ENCODE measurements at regions of chr9 and their contacts with region 1.

Region 1: GRCh38 chr9:4762108-4762885 is 21.3 kb upstream of the AK3 start:
- DNase-seq: peak; percentile 81 to 88
- H3K4me3 ChIP-seq: no peak overlapping the region
- H3K27ac ChIP-seq: no peak overlapping the region
- H3K4me1 ChIP-seq: peaks cover 0 to 7% of the 10 kb centered on the region in 2 donors
- H3K27me3 ChIP-seq: no peaks in the 10 kb centered on the region
- CTCF ChIP-seq: peak; percentile 55 to 92 (median 79)
- POLR2A ChIP-seq: no peak

Region 2: GRCh38 chr9:4657426-4658159 is 104.7 kb before region 1 on chr9:
- intact Hi-C with region 1: no loop called
- DNase-seq: no peak
- H3K4me3 ChIP-seq: no peak overlapping the region
- H3K27ac ChIP-seq: peak overlapping the region in 1 of 3 donors; percentile 15
- H3K4me1 ChIP-seq: peaks cover 4 to 10% of the 10 kb centered on the region in 2 donors
- H3K27me3 ChIP-seq: no peaks in the 10 kb centered on the region
- CTCF ChIP-seq: no peak
- POLR2A ChIP-seq: no peak

Region 3: DNA sequence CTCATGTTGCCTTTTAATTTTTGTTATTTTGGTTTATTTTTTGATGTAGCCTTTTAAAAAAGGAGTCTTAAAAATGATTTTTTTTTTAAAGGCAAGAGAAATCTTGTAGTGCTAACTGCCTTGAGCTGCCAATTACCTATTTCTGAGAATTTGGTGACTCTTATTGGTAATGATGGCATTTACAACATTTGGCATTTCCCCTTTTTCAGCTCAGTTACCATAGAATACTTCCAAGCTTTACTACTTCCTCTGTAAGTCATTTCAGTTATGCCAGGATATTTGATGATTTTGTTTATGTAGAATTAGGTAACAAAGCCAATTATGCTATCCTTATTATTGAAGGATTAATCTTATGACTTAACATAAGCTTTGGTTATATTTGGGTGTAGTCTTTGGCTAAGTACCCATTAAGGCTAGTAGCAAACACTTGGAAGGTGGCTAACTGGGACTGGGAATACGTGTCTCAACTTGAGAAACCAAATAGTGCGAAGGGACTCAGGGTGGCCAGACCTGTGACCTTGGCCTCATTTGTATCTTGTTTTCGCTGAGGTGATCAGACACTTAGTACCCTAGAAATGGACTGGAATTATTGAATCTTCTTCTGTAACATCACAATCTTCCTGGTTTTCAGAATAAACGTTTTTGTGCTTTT is 55.2 kb before region 1 on chr9:
- intact Hi-C with region 1: no loop called
- DNase-seq: no peak
- H3K4me3 ChIP-seq: no peak overlapping the region
- H3K27ac ChIP-seq: no peak overlapping the region
- H3K4me1 ChIP-seq: no peaks in the 10 kb centered on the region
- H3K27me3 ChIP-seq: no peaks in the 10 kb centered on the region
- CTCF ChIP-seq: no peak
- POLR2A ChIP-seq: no peak

Region 4: DNA sequence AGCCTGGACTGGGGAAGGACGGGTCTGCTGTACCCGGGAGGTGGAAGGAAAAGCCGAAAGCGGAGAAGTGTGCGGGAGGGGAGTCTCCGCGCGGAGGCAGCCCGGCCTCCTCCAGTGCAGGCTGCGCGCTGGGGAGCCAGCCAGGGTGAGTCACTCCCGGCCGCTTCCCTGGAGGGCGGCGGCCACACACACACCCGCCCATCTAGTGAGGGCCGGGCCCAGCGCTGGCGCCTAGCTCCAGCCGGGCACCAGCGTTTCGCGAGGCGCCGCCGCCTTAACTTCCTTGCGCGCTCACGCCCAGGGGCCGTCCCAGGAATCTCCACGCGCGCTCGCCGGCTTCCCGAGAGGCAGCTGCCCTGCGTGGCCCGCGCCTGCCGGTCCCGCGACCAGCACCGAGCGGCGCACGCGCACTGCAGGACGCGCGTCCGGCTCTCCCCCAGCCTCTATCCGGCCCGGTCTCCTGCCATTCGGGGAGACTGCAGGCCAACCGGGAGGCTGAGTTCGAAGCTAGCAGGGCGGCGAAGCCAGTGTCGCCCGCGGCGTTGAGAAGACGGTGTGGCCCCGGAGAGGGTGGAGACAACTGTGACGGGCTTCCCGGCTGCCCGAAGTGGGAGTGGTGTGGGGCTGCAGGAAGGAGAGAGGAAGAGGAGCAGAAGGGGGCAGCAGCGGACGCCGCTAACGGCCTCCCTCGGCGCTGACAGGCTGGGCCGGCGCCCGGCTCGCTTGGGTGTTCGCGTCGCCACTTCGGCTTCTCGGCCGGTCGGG is 222.5 kb after region 1 on chr9 and contains the start of gene JAK2:
- intact Hi-C with region 1: loop called (anchors 5 kb)
- DNase-seq: peak; percentile 90 to 91
- H3K4me3 ChIP-seq: peak within 1 kb of the TSS; percentile 40 to 93 (median 68)
- H3K27ac ChIP-seq: peak within 1 kb of the TSS; percentile 90 to 95 (median 95)
- H3K4me1 ChIP-seq: peaks cover 4 to 16% of the 10 kb centered on the region in 2 donors
- H3K27me3 ChIP-seq: no peaks in the 10 kb centered on the region
- CTCF ChIP-seq: peak in 2 of 6 experiments; percentile 17 to 43
- POLR2A ChIP-seq: peak in 1 of 2 donors; percentile 89
- total RNA-seq, gene JAK2: 13.9 to 17.8 (median 14.3) TPM

Region 5: GRCh38 chr9:5425006-5425628 is 662.8 kb after region 1 on chr9:
- intact Hi-C with region 1: loop called (anchors 10 kb)
- DNase-seq: no peak
- H3K4me3 ChIP-seq: no peak overlapping the region
- H3K27ac ChIP-seq: no peak overlapping the region
- H3K4me1 ChIP-seq: no peaks in the 10 kb centered on the region
- H3K27me3 ChIP-seq: no peaks in the 10 kb centered on the region
- CTCF ChIP-seq: peak in 4 of 6 experiments; percentile 10 to 36 (median 24)
- POLR2A ChIP-seq: no peak

Measured in thyroid gland (tissue), 4 donors.